ENCODE measurements at regions of chr14 and their contacts with region 1.

Region 1: GRCh38 chr14:74459289-74459946 is 33.4 kb upstream of the SYNDIG1L start:
- DNase-seq: peak; percentile 41 to 77 (median 77)
- H3K4me3 ChIP-seq: no peak overlapping the region
- H3K27ac ChIP-seq: no peak overlapping the region
- H3K4me1 ChIP-seq: peaks cover 0 to 19% (median 10%) of the 10 kb centered on the region in 4 experiments
- H3K27me3 ChIP-seq: no peaks in the 10 kb centered on the region

Region 2: DNA sequence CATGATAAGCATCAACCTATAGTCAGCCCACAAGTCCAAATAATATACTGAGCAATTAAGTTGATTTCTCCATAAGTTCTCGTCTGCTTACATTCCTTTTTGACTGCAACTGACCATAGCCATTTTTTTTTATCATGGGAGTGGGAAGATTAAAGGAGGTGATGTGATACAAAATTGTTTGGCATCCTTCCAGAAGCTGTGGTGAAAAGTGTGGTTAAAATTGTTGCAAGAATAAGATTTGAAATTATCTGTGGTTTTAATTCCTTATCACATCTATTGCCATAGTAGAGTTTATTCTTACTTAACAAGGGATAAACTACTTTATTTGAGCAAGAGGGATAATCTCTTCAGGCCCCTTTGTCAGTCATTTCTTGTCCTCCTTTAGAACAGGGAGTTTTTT is 324.0 kb before region 1 on chr14:
- CTCF ChIA-PET with region 1: no interaction called
- POLR2A ChIA-PET with region 1: no interaction called
- DNase-seq: peak in 2 of 3 donors; percentile 6 to 16
- H3K4me3 ChIP-seq: no peak overlapping the region
- H3K27ac ChIP-seq: no peak overlapping the region
- H3K4me1 ChIP-seq: peaks cover 8 to 12% (median 10%) of the 10 kb centered on the region in 4 experiments
- H3K27me3 ChIP-seq: no peaks in the 10 kb centered on the region

Region 3: DNA sequence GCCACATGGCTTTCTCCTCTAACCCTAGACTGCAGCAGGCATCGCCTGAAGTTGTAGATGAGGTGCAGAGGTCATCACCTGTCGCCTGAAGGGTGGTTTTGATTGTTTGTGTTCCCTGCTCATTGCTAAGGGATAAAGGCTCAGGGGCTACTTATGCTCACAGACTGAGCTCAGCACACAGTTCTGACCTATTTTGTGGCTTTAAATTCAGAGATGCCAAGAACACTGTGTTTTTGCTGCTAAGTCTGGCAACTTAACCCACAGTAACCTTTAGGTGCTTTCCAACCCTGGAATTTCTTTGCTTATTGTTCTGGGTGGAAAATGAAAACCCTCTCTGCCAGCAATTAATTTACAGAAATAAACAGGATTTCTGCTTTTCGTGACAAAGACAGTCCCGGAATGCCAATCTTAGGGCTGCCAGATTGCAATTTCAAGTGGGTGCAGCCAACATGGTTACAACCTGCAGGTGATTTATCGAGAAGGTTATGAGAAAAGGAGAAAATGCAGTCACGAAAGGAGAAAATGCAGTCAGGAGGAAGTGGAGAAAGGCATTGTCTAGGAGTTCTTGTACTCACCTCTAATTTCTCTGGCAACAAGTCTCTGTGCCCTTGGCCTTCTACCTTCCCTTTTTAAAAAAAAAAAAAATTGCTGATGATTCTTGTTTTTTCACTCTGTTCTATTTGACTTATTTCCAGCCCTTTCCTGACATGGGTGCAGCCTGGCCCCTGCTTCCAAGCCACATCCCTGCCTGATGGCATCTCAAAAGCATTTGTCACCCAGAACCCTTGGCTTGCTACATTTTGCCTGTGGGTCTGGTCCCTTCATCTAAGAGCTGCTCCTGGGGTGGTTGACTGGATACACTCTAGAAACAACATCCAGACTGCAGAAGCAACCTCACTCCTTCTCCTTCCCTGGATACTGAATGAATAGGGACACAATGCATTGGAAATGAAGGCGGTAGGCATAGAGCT is 10.4 kb after region 1 on chr14:
- CTCF ChIA-PET with region 1: interaction called, 10 read pairs
- POLR2A ChIA-PET with region 1: no interaction called
- DNase-seq: no peak
- H3K4me3 ChIP-seq: no peak overlapping the region
- H3K27ac ChIP-seq: no peak overlapping the region
- H3K4me1 ChIP-seq: no peaks in the 10 kb centered on the region
- H3K27me3 ChIP-seq: no peaks in the 10 kb centered on the region

Region 4: DNA sequence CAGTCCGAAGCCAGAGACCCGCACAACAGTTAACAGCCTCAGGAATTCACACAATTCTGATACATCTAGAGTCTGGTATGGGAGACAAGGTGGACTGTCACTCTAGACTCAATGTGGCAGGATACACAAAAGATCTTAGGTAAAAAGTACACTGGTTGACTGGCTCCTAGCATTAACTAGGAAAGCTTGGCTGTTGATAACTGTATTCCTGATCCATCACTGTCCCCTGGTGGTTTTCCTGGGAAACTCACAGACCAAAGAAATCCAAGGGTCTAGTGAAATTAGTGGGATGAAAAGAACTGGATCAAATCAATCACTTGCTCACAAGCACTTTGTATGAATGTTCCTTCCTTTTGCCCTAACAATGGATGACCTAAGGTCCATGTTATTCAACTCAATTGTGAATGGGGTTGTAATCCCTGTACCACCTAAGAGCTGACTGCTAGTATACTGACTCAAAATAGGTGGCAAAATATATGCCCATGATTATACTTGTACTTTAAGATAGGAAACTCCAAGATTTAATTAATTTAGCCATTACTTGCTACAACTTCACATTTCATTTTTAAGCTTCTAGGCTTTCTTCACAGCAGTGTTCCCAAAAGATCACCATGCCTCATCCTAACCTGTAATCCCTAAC is 19.7 kb after region 1 on chr14:
- CTCF ChIA-PET with region 1: interaction called, 13 read pairs
- POLR2A ChIA-PET with region 1: no interaction called
- DNase-seq: peak in 2 of 3 donors; percentile 18 to 31
- H3K4me3 ChIP-seq: no peak overlapping the region
- H3K27ac ChIP-seq: no peak overlapping the region
- H3K4me1 ChIP-seq: no peaks in the 10 kb centered on the region
- H3K27me3 ChIP-seq: no peaks in the 10 kb centered on the region

Measured in common myeloid progenitor, CD34-positive (primary cell).